ENCODE measurements at regions of chr4 and their contacts with region 1.

Region 1: DNA sequence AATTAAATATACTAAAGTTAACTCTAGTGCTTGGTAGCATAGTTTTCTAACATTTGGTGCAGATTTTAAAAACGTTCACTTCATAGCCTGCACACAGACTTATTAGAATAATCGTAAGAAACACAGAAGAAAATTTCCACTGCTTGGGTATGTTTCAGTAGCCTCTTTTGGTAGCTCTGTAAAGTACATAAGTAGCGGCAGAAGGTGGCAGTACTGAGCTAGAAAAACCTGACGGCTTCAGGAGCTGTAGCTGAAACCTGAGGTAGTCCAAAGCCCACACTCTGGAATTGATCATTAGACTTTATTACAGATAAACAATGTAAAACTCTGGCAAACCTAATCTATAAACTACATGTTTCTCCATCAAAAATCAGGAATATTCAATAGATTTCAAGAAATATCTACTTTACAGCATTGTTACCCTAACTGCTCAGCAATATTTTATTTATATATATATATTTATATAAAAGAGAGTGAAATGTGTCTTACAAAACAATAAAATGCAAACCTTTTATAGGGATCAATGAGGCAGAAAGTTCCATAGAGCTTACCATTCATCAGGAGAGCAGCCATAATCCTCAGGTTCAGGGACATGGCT is 88.2 kb downstream of the ATP8A1 start:
- DNase-seq: peak; percentile 68
- ATAC-seq: peak; percentile 75 to 82

Region 2: DNA sequence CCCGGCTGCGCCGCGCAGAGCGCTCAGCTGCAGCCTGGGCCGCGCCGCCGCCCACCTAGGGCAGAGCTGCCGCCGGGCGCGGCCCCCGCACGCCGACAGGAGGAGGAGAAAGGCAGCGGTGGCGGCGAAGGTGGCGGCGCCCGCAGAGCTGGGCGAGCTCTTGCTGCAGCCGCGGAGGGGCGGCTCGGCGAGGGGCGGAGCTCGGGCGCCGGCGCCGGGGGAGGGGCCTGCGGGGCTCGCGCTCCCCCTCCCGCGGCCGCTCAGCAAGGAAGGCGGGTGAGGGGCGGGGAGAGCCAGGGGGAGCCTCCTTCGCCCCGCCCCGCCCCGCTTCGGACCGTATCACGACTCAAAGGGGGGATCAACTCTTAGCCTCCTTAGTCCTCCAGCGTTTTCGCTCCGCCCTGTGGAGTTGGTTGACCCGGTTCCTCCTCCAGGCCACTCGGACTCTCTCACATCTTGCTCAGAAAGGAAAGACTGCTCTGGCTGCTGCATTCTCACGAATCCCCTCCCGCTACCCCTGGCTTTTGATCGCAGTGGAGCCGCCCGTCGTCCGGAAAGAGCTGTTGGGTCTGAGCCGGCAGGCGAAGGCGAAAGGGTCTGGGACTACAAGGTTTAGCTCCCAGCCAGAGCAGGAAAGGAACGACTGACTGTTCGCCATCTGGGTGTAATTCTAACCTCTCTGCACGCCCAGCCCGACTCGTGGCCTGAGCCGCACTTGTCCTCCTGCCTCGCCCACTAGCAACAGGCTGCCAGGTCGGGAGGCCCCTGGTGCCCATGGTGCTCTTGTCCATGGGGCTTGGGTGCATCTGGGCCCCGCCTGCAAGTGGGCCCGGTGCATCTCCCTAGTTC is 88.5 kb after region 1 on chr4 and contains the start of gene ATP8A1:
- intact Hi-C with region 1: loop called in 1 of 2 experiments (anchors 5 kb)
- DNase-seq: peak; percentile 95
- ATAC-seq: peak; percentile 98
- total RNA-seq, gene ATP8A1: 22.3 to 23.3 TPM

Region 3: GRCh38 chr4:42750091-42750490 is 181.4 kb after region 1 on chr4:
- intact Hi-C with region 1: loop called (anchors 1 to 5 kb)
- DNase-seq: no peak
- ATAC-seq: peak; percentile 69 to 87

Region 4: DNA sequence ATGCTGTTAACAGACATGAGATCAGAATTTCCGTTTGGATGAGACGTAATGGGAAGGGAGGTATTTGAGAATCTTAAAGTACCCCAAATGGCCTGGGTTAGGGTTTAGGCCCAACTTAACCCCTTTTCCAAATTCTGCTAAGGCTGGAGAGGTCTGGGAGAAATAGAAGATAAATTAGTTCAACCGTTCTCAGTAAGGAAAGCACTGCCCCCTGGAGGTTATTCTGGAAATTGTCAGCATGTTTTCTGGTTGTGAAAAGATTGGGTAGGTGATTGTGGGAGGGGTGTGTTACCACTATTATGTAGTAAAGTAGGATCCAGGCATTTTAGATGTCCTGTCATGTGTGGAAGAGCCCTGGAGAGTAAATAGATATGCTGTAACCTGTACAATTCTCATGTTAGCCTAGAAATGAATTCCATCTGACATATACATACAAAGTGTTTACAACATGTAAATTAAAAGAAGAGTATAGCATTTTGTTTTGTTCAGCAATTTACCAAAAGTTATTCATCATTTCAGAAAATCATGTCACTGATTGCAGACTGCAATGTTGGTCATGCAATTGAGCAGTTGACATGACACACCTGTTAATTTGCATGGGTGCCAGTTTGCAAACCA is 297.0 kb after region 1 on chr4:
- intact Hi-C with region 1: loop called (anchors 2 to 10 kb)
- DNase-seq: no peak
- ATAC-seq: peak in 1 of 2 donors; percentile 51

Measured in left cardiac atrium (tissue), 4 donors.